Naive thymus-derived CD4-positive, alpha-beta T cell (primary cell): ENCODE measurements at regions of chr3 and their contacts with region 1.

Region 1: GRCh38 chr3:49673715-49674496 is at the start of gene APEH:
- DNase-seq: peak; percentile 94 to 99 (median 98)
- ATAC-seq: peak; percentile 93
- H3K4me3 ChIP-seq: peak within 1 kb of the TSS; percentile 79
- H3K4me3 Mint-ChIP-seq: peak within 1 kb of the TSS; percentile 90 to 97 (median 94)
- H3K27ac ChIP-seq: peak within 1 kb of the TSS; percentile 94
- H3K27ac Mint-ChIP-seq: peak within 1 kb of the TSS; percentile 93 to 99 (median 96)
- H3K4me1 ChIP-seq: peaks cover 16 to 31% of the 10 kb centered on the region in 2 donors
- H3K4me1 Mint-ChIP-seq: peaks cover 15 to 57% (median 38%) of the 10 kb centered on the region in 7 donors
- H3K27me3 ChIP-seq: no peaks in the 10 kb centered on the region
- H3K27me3 Mint-ChIP-seq: no peaks in the 10 kb centered on the region
- total RNA-seq, gene APEH: 75.5 to 151 (median 99.1) TPM

Region 2: DNA sequence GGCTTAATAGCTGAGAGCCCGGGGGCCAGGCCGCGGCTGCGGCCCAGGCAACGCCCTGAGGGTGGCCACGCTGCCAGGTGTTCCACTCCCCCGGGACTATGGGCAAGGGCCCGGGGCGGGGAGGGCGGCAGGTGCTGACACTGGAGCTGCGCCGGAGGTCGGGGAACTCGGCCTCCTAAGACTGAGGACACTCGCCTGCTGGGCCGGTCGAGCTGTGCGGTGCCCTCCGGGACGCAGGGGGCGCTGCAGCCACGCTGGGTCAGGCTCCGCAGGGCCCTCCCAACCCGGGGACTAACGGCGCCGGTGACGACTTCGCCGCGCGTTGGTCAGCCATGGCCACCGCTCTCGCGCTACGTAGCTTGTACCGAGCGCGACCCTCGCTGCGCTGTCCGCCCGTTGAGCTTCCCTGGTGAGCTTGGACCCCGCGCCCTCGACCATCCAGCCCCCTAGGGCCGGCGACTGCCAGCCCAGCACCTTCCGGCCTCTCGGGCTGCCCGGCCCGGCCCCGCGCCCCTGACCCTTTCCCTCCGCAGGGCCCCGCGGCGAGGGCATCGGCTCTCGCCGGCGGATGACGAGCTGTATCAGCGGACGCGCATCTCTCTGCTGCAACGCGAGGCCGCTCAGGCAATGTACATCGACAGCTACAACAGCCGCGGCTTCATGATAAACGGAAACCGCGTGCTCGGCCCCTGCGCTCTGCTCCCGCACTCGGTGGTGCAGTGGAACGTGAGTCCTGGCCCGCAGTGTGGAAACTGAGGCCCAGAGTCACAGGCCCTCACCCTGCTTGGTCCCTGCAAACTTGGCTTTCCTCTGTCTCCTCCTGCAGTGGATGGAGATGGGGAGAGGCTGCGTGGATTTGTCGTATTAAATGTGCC is 651.9 kb before region 1 on chr3 and contains the start of gene NDUFAF3:
- CTCF ChIA-PET with region 1: no interaction called
- POLR2A ChIA-PET with region 1: no interaction called
- intact Hi-C with region 1: loop called in 1 of 2 experiments (anchors 1 kb)
- DNase-seq: peak; percentile 84 to 96 (median 89)
- ATAC-seq: peak; percentile 89
- H3K4me3 ChIP-seq: peak within 1 kb of the TSS; percentile 99
- H3K4me3 Mint-ChIP-seq: peak within 1 kb of the TSS; percentile 92 to 99 (median 97)
- H3K27ac ChIP-seq: peak within 1 kb of the TSS; percentile 98
- H3K27ac Mint-ChIP-seq: peak within 1 kb of the TSS; percentile 95 to 99 (median 98)
- H3K4me1 ChIP-seq: peaks cover 24 to 25% of the 10 kb centered on the region in 2 donors
- H3K4me1 Mint-ChIP-seq: peaks cover 21 to 61% (median 47%) of the 10 kb centered on the region in 7 donors
- H3K27me3 ChIP-seq: no peaks in the 10 kb centered on the region
- H3K27me3 Mint-ChIP-seq: peaks cover 0 to 2% (median 0%) of the 10 kb centered on the region in 5 donors
- total RNA-seq, gene NDUFAF3: 63.8 to 110 (median 89.3) TPM

Region 3: DNA sequence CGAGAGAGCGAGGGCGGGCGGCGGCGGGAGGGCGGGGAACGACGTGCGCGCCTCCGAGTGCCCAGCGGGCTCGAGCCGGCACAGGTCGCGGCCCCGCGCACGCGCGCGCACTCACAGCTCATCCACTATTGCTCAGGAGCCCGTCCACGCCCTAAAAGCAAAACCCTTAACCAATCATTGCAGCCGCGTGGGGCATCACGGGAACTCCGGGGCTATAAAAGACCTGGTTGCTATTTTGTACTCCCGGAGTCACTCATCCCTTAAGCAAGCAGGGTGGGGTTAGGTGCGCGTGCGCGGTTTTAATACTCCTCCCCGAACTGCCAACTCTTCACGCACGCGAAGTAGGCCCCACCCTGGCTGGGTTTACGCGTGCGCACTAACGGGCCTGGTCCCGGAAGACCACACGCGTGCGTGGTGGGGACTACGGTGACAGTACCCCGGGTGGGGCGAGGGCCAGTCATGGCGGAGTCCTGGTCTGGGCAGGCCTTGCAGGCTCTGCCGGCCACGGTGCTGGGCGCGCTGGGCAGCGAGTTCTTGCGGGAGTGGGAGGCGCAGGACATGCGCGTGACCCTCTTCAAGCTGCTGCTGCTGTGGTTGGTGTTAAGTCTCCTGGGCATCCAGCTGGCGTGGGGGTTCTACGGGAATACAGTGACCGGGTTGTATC is 261.8 kb before region 1 on chr3 and contains the starts of genes RHOA and TCTA:
- CTCF ChIA-PET with region 1: no interaction called
- POLR2A ChIA-PET with region 1: no interaction called
- intact Hi-C with region 1: loop called (anchors 1 kb)
- DNase-seq: peak; percentile 94 to 100 (median 99)
- ATAC-seq: peak; percentile 90
- H3K4me3 ChIP-seq: peak within 1 kb of the TSS; percentile 86
- H3K4me3 Mint-ChIP-seq: peak within 1 kb of the TSS; percentile 82 to 97 (median 94)
- H3K27ac ChIP-seq: peak within 1 kb of the TSS; percentile 96
- H3K27ac Mint-ChIP-seq: peak within 1 kb of the TSS; percentile 88 to 97 (median 95)
- H3K4me1 ChIP-seq: peaks cover 61 to 65% of the 10 kb centered on the region in 2 donors
- H3K4me1 Mint-ChIP-seq: peaks cover 51 to 82% (median 71%) of the 10 kb centered on the region in 7 donors
- H3K27me3 ChIP-seq: no peaks in the 10 kb centered on the region
- H3K27me3 Mint-ChIP-seq: peaks cover 0 to 2% (median 0%) of the 10 kb centered on the region in 5 donors
- total RNA-seq, gene RHOA: 212 to 411 (median 218) TPM
- total RNA-seq, gene TCTA: 24.9 to 34.5 (median 28.5) TPM

Region 4: DNA sequence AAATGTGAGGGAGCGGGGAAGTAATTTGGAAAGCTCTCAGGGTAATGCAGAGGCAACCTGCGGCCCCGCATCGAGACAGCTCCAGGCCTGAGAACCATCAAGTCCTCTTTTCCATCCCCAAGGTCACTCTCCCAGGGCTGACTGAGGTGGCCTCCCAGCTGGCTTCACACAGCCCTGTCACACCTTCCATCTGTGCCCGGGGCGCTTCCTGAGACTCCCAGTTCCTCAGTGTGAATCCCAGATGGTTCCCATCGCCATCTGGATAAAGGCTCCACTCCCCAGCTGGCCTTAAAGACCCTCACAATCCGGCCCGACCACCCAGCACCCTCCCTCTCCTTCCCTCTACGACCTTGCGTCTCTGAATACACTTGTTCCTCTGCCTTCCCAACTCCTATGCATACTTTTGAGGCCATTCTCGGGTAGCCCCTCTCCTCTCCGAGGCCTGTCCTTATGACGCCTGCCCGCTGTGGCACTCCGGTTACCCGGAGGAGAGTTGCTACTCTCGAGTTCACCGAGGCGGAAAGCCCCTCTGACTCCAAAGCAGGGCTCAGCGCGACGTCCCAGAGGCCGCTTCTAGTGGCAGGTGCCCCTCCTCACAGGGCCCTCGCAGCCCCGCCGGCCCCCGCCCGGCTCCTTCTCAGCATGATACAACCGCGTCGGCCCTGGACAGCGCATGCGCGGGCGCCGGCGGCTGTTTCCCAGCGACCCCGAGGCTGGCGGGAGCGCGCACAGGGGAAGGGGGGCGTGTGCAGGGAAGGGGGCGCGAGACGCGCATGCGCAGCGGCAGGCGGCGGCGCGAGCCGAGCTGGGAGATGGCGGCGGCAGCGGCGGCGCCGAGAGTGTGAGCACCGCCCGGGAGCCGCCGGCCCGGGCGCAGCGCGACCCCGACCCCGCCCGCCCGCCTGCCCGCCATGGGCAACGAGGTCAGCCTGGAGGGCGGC is 119.9 kb before region 1 on chr3 and contains the start of gene BSN:
- CTCF ChIA-PET with region 1: no interaction called
- POLR2A ChIA-PET with region 1: no interaction called
- intact Hi-C with region 1: loop called in 1 of 2 experiments (anchors 1 kb)
- DNase-seq: peak; percentile 81 to 92 (median 88)
- ATAC-seq: peak; percentile 91
- H3K4me3 ChIP-seq: peak within 1 kb of the TSS; percentile 75
- H3K4me3 Mint-ChIP-seq: peak within 1 kb of the TSS; percentile 80 to 92 (median 86)
- H3K27ac ChIP-seq: peak within 1 kb of the TSS; percentile 37
- H3K27ac Mint-ChIP-seq: peak within 1 kb of the TSS in 8 of 9 donors; percentile 20 to 92 (median 41)
- H3K4me1 ChIP-seq: peaks cover 0 to 20% of the 10 kb centered on the region in 2 donors
- H3K4me1 Mint-ChIP-seq: peaks cover 9 to 20% (median 13%) of the 10 kb centered on the region in 7 donors
- H3K27me3 ChIP-seq: no peaks in the 10 kb centered on the region
- H3K27me3 Mint-ChIP-seq: peaks cover 41 to 56% (median 46%) of the 10 kb centered on the region in 5 donors
- total RNA-seq, gene BSN: 0.12 to 0.16 (median 0.14) TPM

Region 5: GRCh38 chr3:49723628-49724551 is 50.0 kb after region 1 on chr3 and contains the start of gene GMPPB:
- CTCF ChIA-PET with region 1: no interaction called
- POLR2A ChIA-PET with region 1: no interaction called
- intact Hi-C with region 1: loop called (anchors 1 kb)
- DNase-seq: peak; percentile 83 to 95 (median 87)
- ATAC-seq: peak; percentile 85
- H3K4me3 ChIP-seq: peak within 1 kb of the TSS; percentile 89
- H3K4me3 Mint-ChIP-seq: peak within 1 kb of the TSS; percentile 91 to 98 (median 96)
- H3K27ac ChIP-seq: peak within 1 kb of the TSS; percentile 96
- H3K27ac Mint-ChIP-seq: peak within 1 kb of the TSS; percentile 82 to 99 (median 97)
- H3K4me1 ChIP-seq: peaks cover 11 to 17% of the 10 kb centered on the region in 2 donors
- H3K4me1 Mint-ChIP-seq: peaks cover 12 to 37% (median 31%) of the 10 kb centered on the region in 7 donors
- H3K27me3 ChIP-seq: no peaks in the 10 kb centered on the region
- H3K27me3 Mint-ChIP-seq: no peaks in the 10 kb centered on the region
- total RNA-seq, gene GMPPB: 38.3 to 60.4 (median 43.9) TPM

Region 6: DNA sequence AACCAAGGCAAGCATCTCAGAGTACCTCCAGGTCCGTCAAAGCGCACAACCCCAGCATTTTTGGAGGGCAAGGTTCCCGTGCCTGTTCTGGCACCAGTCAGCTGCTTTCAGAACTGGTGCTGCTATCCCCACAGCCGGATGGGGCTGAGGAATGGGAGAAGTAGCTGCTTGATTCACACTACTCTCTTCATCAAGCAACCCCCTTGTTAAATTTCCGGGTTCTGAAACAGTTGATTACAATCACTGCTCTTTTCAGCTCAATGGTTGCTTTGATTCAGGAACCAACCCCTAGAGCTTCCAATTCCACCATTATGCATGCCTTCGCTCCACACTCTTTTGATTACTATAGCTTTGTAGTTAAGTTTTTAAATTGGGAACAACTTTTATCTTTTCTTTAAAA is 152.1 kb after region 1 on chr3:
- CTCF ChIA-PET with region 1: no interaction called
- POLR2A ChIA-PET with region 1: no interaction called
- intact Hi-C with region 1: no loop called
- DNase-seq: no peak
- ATAC-seq: no peak
- H3K4me3 ChIP-seq: no peak overlapping the region
- H3K4me3 Mint-ChIP-seq: no peak overlapping the region
- H3K27ac ChIP-seq: no peak overlapping the region
- H3K27ac Mint-ChIP-seq: no peak overlapping the region
- H3K4me1 ChIP-seq: no peaks in the 10 kb centered on the region
- H3K4me1 Mint-ChIP-seq: no peaks in the 10 kb centered on the region
- H3K27me3 ChIP-seq: no peaks in the 10 kb centered on the region
- H3K27me3 Mint-ChIP-seq: no peaks in the 10 kb centered on the region

Region 7: GRCh38 chr3:49929331-49930240 is 255.7 kb after region 1 on chr3 and contains the start of gene MON1A:
- CTCF ChIA-PET with region 1: no interaction called
- POLR2A ChIA-PET with region 1: no interaction called
- intact Hi-C with region 1: loop called in 1 of 2 experiments (anchors 5 kb)
- DNase-seq: peak; percentile 65 to 94 (median 74)
- ATAC-seq: peak; percentile 97
- H3K4me3 ChIP-seq: peak within 1 kb of the TSS; percentile 92
- H3K4me3 Mint-ChIP-seq: peak within 1 kb of the TSS; percentile 82 to 90 (median 86)
- H3K27ac ChIP-seq: peak within 1 kb of the TSS; percentile 91
- H3K27ac Mint-ChIP-seq: peak within 1 kb of the TSS; percentile 78 to 92 (median 88)
- H3K4me1 ChIP-seq: peaks cover 6 to 13% of the 10 kb centered on the region in 2 donors
- H3K4me1 Mint-ChIP-seq: peaks cover 6 to 36% (median 31%) of the 10 kb centered on the region in 7 donors
- H3K27me3 ChIP-seq: no peaks in the 10 kb centered on the region
- H3K27me3 Mint-ChIP-seq: no peaks in the 10 kb centered on the region
- total RNA-seq, gene MON1A: 4.6 to 12.6 (median 8.6) TPM

Region 8: GRCh38 chr3:50321336-50322114 is 647.6 kb after region 1 on chr3:
- CTCF ChIA-PET with region 1: no interaction called
- POLR2A ChIA-PET with region 1: no interaction called
- intact Hi-C with region 1: loop called in 1 of 2 experiments (anchors 1 kb)
- DNase-seq: peak; percentile 67 to 90 (median 83)
- ATAC-seq: peak; percentile 83
- H3K4me3 ChIP-seq: peak overlapping the region; percentile 97
- H3K4me3 Mint-ChIP-seq: peak overlapping the region; percentile 74 to 90 (median 82)
- H3K27ac ChIP-seq: peak overlapping the region; percentile 95
- H3K27ac Mint-ChIP-seq: peak overlapping the region; percentile 40 to 96 (median 93)
- H3K4me1 ChIP-seq: peaks cover 12 to 21% of the 10 kb centered on the region in 2 donors
- H3K4me1 Mint-ChIP-seq: peaks cover 21 to 45% (median 36%) of the 10 kb centered on the region in 7 donors
- H3K27me3 ChIP-seq: no peaks in the 10 kb centered on the region
- H3K27me3 Mint-ChIP-seq: no peaks in the 10 kb centered on the region